Common myeloid progenitor, CD34-positive (primary cell): ENCODE measurements at regions of chr9 and their contacts with region 1.

Region 1: GRCh38 chr9:91949946-91950664 is at the start of gene ROR2:
- DNase-seq: peak; percentile 51 to 75 (median 70)
- H3K4me3 ChIP-seq: peak within 1 kb of the TSS; percentile 28 to 76 (median 56)
- H3K27ac ChIP-seq: no peak within 1 kb of the TSS
- H3K4me1 ChIP-seq: peaks cover 0 to 28% (median 16%) of the 10 kb centered on the region in 4 experiments
- H3K27me3 ChIP-seq: peaks cover 16 to 87% (median 35%) of the 10 kb centered on the region in 5 experiments

Region 2: DNA sequence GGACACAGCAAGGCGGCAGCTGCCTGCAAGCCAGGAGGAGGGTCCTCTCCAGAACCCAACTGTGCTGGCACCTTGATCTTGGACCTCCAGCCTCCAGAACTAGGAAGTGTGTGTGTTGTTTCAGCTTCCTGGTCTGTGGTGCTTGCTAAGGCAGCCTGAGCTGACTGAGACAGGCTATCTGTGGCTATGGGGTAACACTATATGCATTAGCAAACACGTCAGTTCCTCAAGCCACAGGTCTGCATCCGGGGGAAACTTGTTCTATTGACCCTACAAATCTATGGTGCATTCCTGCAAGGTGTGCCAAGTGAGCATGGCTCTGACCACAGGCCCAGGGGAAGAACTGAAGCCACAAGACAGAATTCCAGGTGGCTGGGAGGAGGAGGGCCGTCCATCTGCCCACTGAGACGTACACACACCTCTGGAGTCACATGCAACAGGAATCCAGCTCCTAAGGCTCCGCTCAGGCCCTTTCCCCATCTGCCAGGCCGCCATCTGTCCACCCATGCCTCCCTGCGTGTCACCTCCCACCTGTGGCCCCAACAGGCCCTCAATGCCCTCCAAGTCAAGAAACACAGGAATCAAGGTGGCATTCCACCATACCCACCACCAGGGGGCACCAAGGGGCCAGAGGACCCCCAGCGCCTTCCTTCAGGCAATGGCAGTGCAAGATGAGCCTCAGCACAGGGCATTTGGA is 174.9 kb before region 1 on chr9:
- CTCF ChIA-PET with region 1: interaction called, 15 read pairs
- POLR2A ChIA-PET with region 1: no interaction called
- DNase-seq: peak; percentile 50 to 76 (median 73)
- H3K4me3 ChIP-seq: no peak overlapping the region
- H3K27ac ChIP-seq: no peak overlapping the region
- H3K4me1 ChIP-seq: peaks cover 6 to 16% (median 9%) of the 10 kb centered on the region in 4 experiments
- H3K27me3 ChIP-seq: no peaks in the 10 kb centered on the region

Region 3: GRCh38 chr9:91857291-91858212 is 92.6 kb before region 1 on chr9:
- CTCF ChIA-PET with region 1: no interaction called
- POLR2A ChIA-PET with region 1: no interaction called
- DNase-seq: peak in 1 of 3 donors; percentile 18
- H3K4me3 ChIP-seq: no peak overlapping the region
- H3K27ac ChIP-seq: no peak overlapping the region
- H3K4me1 ChIP-seq: peaks cover 0 to 8% (median under 1%) of the 10 kb centered on the region in 4 experiments
- H3K27me3 ChIP-seq: no peaks in the 10 kb centered on the region

Region 4: DNA sequence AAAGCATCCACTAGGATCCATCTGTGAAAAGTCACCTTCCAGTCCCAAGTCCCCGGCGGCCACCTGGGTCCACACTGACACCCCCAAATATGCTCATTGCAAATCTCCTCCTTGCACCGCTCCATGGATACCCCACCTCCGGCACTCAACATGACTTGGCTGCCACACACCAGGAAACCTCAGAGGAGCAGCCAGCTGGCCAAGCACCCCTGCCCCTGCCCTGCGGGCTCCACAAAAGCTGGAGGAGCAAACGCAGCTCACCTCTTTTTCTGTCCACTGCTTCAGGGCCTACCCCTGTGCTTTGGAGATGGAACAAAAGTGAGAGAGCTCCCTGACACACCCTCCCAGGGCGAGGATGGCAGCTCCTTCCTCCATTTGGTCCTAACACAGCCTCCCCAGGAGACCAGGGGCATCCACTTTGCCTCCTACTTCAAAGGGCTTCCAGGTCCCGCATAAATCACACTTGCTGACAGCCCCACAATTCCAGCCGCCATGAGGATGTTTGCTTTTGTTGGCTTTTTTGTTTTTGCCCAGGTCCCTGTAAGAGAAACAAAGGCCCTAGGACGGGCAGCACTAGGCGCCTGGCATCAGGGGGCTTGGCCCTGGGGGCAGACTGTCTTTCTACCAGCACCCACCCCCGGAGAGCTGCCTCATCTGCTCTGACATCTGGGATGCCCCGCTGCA is 14.9 kb before region 1 on chr9:
- CTCF ChIA-PET with region 1: interaction called, 12 read pairs
- POLR2A ChIA-PET with region 1: no interaction called
- DNase-seq: no peak
- H3K4me3 ChIP-seq: no peak overlapping the region
- H3K27ac ChIP-seq: no peak overlapping the region
- H3K4me1 ChIP-seq: no peaks in the 10 kb centered on the region
- H3K27me3 ChIP-seq: peaks cover 0 to 13% (median 0%) of the 10 kb centered on the region in 5 experiments

Region 5: GRCh38 chr9:92035687-92036410 is 85.7 kb after region 1 on chr9:
- CTCF ChIA-PET with region 1: no interaction called
- POLR2A ChIA-PET with region 1: no interaction called
- DNase-seq: no peak
- H3K4me3 ChIP-seq: no peak overlapping the region
- H3K27ac ChIP-seq: no peak overlapping the region
- H3K4me1 ChIP-seq: no peaks in the 10 kb centered on the region
- H3K27me3 ChIP-seq: no peaks in the 10 kb centered on the region

Region 6: DNA sequence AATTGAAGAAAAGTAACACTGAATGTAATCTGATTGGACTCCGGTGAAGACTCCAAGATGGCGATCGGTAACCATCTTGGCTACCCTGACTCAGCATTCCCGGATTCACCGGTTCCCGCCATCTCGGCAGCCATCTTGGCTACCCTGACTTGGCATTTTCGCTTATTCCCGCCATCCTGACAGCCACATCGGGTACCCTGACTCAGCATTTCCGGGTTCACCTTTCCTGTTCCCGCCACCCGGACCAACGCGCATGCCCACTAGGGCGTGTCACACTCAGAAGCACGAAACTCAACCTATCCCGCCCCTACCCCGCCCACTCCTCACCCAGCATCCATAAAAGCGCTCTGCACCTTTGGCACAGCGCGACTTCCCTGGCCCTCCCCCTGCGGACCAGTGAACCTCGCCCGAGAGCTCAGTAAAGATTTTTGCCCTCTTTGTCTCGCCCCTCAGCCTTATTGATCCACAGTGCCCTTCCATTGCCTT is 147.9 kb after region 1 on chr9:
- CTCF ChIA-PET with region 1: no interaction called
- POLR2A ChIA-PET with region 1: no interaction called
- DNase-seq: peak; percentile 53 to 80 (median 77)
- H3K4me3 ChIP-seq: peak overlapping the region in 1 of 7 experiments; percentile 36
- H3K27ac ChIP-seq: no peak overlapping the region
- H3K4me1 ChIP-seq: peaks cover 0 to 16% (median under 1%) of the 10 kb centered on the region in 4 experiments
- H3K27me3 ChIP-seq: no peaks in the 10 kb centered on the region